HEK293 (cell line): ENCODE measurements at regions of chr15 and their contacts with region 1.

Region 1: GRCh38 chr15:97566961-97567360 is 393.5 kb upstream of the ARRDC4 start:
- H3K4me3 ChIP-seq: no peak overlapping the region
- H3K27ac ChIP-seq: no peak overlapping the region
- H3K4me1 ChIP-seq: 0 out of 2 replicates have a peak, but pooled peaks cover 2% of the 10 kb centered on the region
- CTCF ChIP-seq: no peak

Region 2: DNA sequence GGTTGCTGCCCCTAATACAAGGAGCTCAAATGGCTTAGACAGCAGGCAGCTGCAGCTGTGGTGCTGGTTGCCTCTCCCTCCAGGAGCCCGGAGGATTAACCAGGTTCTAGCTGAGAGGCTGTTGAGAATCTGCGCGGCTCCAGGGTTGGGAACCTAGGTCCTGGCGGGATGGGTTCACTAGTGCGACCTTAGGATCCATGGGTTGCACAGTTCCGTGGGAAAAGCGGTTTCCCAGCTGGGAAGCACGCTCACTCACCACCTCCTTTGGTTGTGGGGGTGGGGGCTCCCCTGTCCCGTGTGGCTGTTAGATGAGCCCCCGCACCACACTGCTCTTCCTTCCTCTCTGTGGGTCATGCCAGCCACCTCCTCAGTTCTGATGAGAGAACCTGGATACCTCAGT is 18.4 kb after region 1 on chr15:
- CTCF ChIA-PET with region 1: interaction called, 10 read pairs
- POLR2A ChIA-PET with region 1: no interaction called
- H3K4me3 ChIP-seq: no peak overlapping the region
- H3K27ac ChIP-seq: no peak overlapping the region
- H3K4me1 ChIP-seq: no peaks in the 10 kb centered on the region
- CTCF ChIP-seq: no peak